ENCODE measurements at regions of chr1 and their contacts with region 1.

Region 1: GRCh38 chr1:150925816-150926741 is at the start of gene SETDB1:
- DNase-seq: peak; percentile 97 to 98 (median 98)
- ATAC-seq: peak; percentile 99
- H3K4me3 ChIP-seq: peak within 1 kb of the TSS; percentile 97
- H3K27ac ChIP-seq: peak within 1 kb of the TSS; percentile 94
- H3K4me1 ChIP-seq: peaks cover 3% of the 10 kb centered on the region
- H3K27me3 ChIP-seq: no peaks in the 10 kb centered on the region
- total RNA-seq, gene SETDB1: 17.4 to 23.8 (median 20.3) TPM

Region 2: GRCh38 chr1:150876119-150876454 is 50.0 kb before region 1 on chr1:
- intact Hi-C with region 1: loop called in 2 of 4 experiments (anchors 5 to 10 kb)
- DNase-seq: no peak
- ATAC-seq: peak; percentile 73 to 82
- H3K4me3 ChIP-seq: peak overlapping the region; percentile 91
- H3K27ac ChIP-seq: peak overlapping the region; percentile 93
- H3K4me1 ChIP-seq: peaks cover 5% of the 10 kb centered on the region
- H3K27me3 ChIP-seq: no peaks in the 10 kb centered on the region

Region 3: DNA sequence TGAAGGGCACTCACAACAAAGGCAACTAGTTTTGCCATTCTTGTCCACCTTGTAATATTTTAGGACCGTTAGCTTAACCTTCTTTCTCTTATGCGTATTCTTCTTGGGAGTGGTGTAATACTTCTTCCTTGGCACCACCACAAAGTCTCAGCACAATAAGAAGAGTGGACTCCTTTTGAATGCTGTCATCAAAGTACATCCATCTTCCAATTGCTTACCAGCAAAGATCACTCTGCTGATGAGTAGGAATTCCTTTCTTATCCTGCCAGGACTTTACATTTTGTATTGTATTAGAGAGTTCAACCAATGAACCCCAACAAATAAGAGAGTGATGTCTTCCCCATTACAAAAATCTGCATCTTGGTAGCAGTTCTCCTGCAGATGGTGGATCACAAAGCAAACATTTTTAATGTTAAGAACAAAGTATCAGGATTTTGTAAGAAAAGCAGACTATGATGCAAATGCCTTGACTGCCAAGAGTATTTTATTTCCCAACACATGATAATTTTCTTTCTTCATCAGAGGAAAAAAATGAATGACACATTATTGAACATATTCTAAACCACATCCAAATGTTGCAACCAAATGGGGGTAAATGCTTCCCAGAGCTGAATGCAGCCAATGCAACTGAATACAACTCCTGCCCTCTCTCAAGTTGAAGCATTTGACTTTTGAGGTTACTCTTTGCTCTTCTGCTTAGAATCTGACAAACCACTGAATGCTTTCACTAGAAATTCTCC is 44.6 kb before region 1 on chr1:
- intact Hi-C with region 1: loop called in 2 of 4 experiments (anchors 5 to 10 kb)
- DNase-seq: no peak
- ATAC-seq: peak; percentile 76 to 85
- H3K4me3 ChIP-seq: no peak overlapping the region
- H3K27ac ChIP-seq: peak overlapping the region; percentile 96
- H3K4me1 ChIP-seq: peaks cover 4% of the 10 kb centered on the region
- H3K27me3 ChIP-seq: no peaks in the 10 kb centered on the region

Region 4: GRCh38 chr1:151175910-151176309 is 249.8 kb after region 1 on chr1 and contains the start of gene TMOD4:
- intact Hi-C with region 1: no loop called
- DNase-seq: no peak
- ATAC-seq: peak; percentile 30 to 34
- H3K4me3 ChIP-seq: no peak within 1 kb of the TSS
- H3K27ac ChIP-seq: no peak within 1 kb of the TSS
- H3K4me1 ChIP-seq: no peaks in the 10 kb centered on the region
- H3K27me3 ChIP-seq: no peaks in the 10 kb centered on the region
- total RNA-seq, gene TMOD4: not detected

Measured in right cardiac atrium (tissue), 5 donors.